ENCODE measurements at regions of chr12 and their contacts with region 1.

Region 1: GRCh38 chr12:68610370-68611093 is at the start of gene RAP1B:
- DNase-seq: peak; percentile 89
- H3K4me3 Mint-ChIP-seq: peak within 1 kb of the TSS; percentile 91
- H3K27ac Mint-ChIP-seq: peak within 1 kb of the TSS; percentile 98
- H3K4me1 Mint-ChIP-seq: peaks cover 37% of the 10 kb centered on the region
- H3K27me3 Mint-ChIP-seq: no peaks in the 10 kb centered on the region
- total RNA-seq, gene RAP1B: 170 TPM

Region 2: GRCh38 chr12:68080577-68080976 is 530.0 kb before region 1 on chr12:
- CTCF ChIA-PET with region 1: no interaction called
- intact Hi-C with region 1: no loop called
- DNase-seq: peak; percentile 65
- H3K4me3 Mint-ChIP-seq: no peak overlapping the region
- H3K27ac Mint-ChIP-seq: peak overlapping the region; percentile 44
- H3K4me1 Mint-ChIP-seq: peaks cover 24% of the 10 kb centered on the region
- H3K27me3 Mint-ChIP-seq: peaks cover 2% of the 10 kb centered on the region

Region 3: GRCh38 chr12:68358532-68359485 is 251.7 kb before region 1 on chr12:
- CTCF ChIA-PET with region 1: interaction called, 6 read pairs
- intact Hi-C with region 1: loop called (anchors 1 kb)
- DNase-seq: peak; percentile 84
- H3K4me3 Mint-ChIP-seq: no peak overlapping the region
- H3K27ac Mint-ChIP-seq: peak overlapping the region; percentile 10
- H3K4me1 Mint-ChIP-seq: peaks cover 25% of the 10 kb centered on the region
- H3K27me3 Mint-ChIP-seq: no peaks in the 10 kb centered on the region

Region 4: DNA sequence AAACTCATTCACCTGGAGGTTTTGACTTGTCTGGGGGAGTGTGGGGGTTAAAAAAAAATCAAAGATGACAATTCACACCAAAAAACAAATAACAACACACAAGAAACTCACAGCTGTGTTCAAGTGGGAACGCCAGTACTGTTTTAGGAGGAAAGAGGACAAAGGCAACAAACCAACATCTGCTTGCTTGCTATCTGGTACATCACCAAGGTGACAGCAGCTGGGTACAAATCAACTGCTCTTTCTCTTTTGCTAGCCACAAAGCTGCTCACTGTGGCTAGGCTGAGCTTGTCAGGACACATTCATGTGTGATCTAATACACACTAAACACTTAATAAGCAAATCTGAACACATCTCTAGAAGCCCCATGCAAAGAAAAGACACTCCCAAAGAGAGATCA is 127.9 kb before region 1 on chr12:
- CTCF ChIA-PET with region 1: interaction called, 4 read pairs
- intact Hi-C with region 1: loop called (anchors 1 kb)
- DNase-seq: peak; percentile 28
- H3K4me3 Mint-ChIP-seq: no peak overlapping the region
- H3K27ac Mint-ChIP-seq: peak overlapping the region; percentile 42
- H3K4me1 Mint-ChIP-seq: peaks cover 37% of the 10 kb centered on the region
- H3K27me3 Mint-ChIP-seq: no peaks in the 10 kb centered on the region

Region 5: GRCh38 chr12:68595241-68595640 is 15.3 kb before region 1 on chr12:
- CTCF ChIA-PET with region 1: interaction called, 5 read pairs
- intact Hi-C with region 1: loop called (anchors 1 kb)
- DNase-seq: no peak
- H3K4me3 Mint-ChIP-seq: no peak overlapping the region
- H3K27ac Mint-ChIP-seq: no peak overlapping the region
- H3K4me1 Mint-ChIP-seq: peaks cover 64% of the 10 kb centered on the region
- H3K27me3 Mint-ChIP-seq: no peaks in the 10 kb centered on the region

Region 6: GRCh38 chr12:68686595-68687521 is 76.3 kb after region 1 on chr12 and contains the start of gene NUP107:
- CTCF ChIA-PET with region 1: interaction called, 3 read pairs
- intact Hi-C with region 1: loop called (anchors 1 kb)
- DNase-seq: peak; percentile 98
- H3K4me3 Mint-ChIP-seq: peak within 1 kb of the TSS; percentile 98
- H3K27ac Mint-ChIP-seq: peak within 1 kb of the TSS; percentile 96
- H3K4me1 Mint-ChIP-seq: peaks cover 39% of the 10 kb centered on the region
- H3K27me3 Mint-ChIP-seq: no peaks in the 10 kb centered on the region
- total RNA-seq, gene NUP107: 126 to 135 TPM

Region 7: DNA sequence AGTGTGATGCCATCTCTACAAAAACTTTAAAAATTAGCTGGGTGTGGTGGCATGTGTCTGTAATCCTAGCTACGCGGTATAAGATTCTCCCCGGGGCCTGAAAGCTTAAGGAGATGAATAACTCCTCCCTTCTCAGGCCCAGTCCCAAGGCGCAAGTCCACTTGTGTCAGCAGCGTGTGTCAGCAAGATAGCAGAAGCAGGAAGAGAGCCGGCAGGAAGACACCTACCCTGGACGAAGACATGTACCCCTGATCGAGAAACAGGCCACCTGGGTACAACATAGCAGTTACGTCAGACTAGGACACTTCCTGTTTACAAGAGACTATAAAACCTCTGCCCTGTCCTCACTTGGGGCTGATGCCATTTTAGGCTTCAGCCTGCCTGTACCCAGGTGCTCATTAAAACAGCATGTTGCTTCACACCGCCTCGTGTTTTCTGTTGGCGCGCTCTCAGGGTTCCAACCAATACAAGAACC is 279.2 kb after region 1 on chr12:
- CTCF ChIA-PET with region 1: no interaction called
- intact Hi-C with region 1: no loop called
- DNase-seq: no peak
- H3K4me3 Mint-ChIP-seq: no peak overlapping the region
- H3K27ac Mint-ChIP-seq: no peak overlapping the region
- H3K4me1 Mint-ChIP-seq: peaks cover 33% of the 10 kb centered on the region
- H3K27me3 Mint-ChIP-seq: peaks cover 2% of the 10 kb centered on the region

Region 8: GRCh38 chr12:69015841-69016240 is 405.3 kb after region 1 on chr12:
- CTCF ChIA-PET with region 1: no interaction called
- intact Hi-C with region 1: no loop called
- DNase-seq: no peak
- H3K4me3 Mint-ChIP-seq: no peak overlapping the region
- H3K27ac Mint-ChIP-seq: no peak overlapping the region
- H3K4me1 Mint-ChIP-seq: no peaks in the 10 kb centered on the region
- H3K27me3 Mint-ChIP-seq: peaks cover 14% of the 10 kb centered on the region

Region 9: GRCh38 chr12:69059483-69060457 is 449.2 kb after region 1 on chr12:
- CTCF ChIA-PET with region 1: no interaction called
- intact Hi-C with region 1: loop called (anchors 2 kb)
- DNase-seq: peak; percentile 37
- H3K4me3 Mint-ChIP-seq: no peak overlapping the region
- H3K27ac Mint-ChIP-seq: peak overlapping the region; percentile 81
- H3K4me1 Mint-ChIP-seq: peaks cover 49% of the 10 kb centered on the region
- H3K27me3 Mint-ChIP-seq: no peaks in the 10 kb centered on the region

Region 10: DNA sequence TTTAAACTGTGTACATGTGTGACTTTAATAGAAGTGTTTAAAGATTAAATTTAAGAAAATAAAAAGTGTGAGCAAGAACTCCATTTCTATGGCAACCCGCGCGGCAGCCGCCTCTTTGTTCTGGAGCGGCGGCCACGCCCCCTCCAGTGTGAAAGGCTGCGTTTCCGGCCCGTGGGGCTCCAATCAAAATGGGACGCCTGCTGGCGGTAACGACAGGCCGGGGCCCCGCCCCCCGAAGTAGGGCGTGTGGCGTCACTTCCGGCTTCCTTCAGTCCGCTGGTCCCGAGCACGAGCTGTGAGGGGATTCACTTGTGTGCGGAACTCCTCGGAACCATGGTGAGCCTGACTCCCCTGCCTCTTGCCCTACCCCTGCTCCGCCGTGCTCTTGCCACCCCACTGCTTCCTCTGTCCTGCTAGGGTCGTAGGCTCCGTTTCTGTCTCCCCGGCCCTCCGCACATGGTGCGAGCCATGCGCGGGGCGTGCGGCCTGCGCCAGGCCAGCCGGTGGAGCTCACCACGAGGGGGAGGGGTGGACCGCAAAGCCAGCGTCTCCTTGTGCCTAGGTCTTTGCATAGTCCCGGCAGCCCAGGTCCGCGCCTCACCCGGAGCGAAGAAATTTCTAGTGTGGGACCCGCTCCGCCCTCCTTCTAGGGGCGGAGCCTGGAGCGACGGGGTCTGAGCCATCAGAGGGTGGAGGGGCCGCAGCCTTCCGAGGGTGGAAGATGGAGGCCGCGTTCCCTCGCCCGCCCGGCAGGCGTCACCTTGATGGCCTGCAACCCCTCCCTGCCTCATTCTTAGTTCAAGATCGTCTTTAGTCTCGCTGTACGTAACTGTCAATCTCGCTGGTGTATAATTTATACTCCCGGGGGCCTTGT is 974.9 kb after region 1 on chr12 and contains the start of gene CCT2:
- CTCF ChIA-PET with region 1: no interaction called
- intact Hi-C with region 1: no loop called
- DNase-seq: peak; percentile 97
- H3K4me3 Mint-ChIP-seq: peak within 1 kb of the TSS; percentile 86
- H3K27ac Mint-ChIP-seq: peak within 1 kb of the TSS; percentile 92
- H3K4me1 Mint-ChIP-seq: peaks cover 27% of the 10 kb centered on the region
- H3K27me3 Mint-ChIP-seq: no peaks in the 10 kb centered on the region
- total RNA-seq, gene CCT2: 268 to 280 TPM

Measured in activated naive CD4-positive, alpha-beta T cell treated with anti-CD3 and anti-CD28 coated beads for 36 hours (primary cell).